Activated naive CD4-positive, alpha-beta T cell treated with anti-CD3 and anti-CD28 coated beads, Interleukin-2, amount 10 ng/mL, durations not matched to agents 7 days and 5 days (primary cell): ENCODE measurements at regions of chr2 and their contacts with region 1.

Region 1: GRCh38 chr2:64586883-64587481 is 62.9 kb downstream of the AFTPH start:
- DNase-seq: no peak
- H3K4me3 Mint-ChIP-seq: no peak overlapping the region
- H3K27ac Mint-ChIP-seq: no peak overlapping the region
- H3K4me1 Mint-ChIP-seq: peaks cover 3% of the 10 kb centered on the region
- H3K27me3 Mint-ChIP-seq: no peaks in the 10 kb centered on the region

Region 2: GRCh38 chr2:64506686-64507085 is 80.3 kb before region 1 on chr2:
- CTCF ChIA-PET with region 1: no interaction called
- DNase-seq: no peak
- H3K4me3 Mint-ChIP-seq: no peak overlapping the region
- H3K27ac Mint-ChIP-seq: no peak overlapping the region
- H3K4me1 Mint-ChIP-seq: no peaks in the 10 kb centered on the region
- H3K27me3 Mint-ChIP-seq: peaks cover 24% of the 10 kb centered on the region

Region 3: DNA sequence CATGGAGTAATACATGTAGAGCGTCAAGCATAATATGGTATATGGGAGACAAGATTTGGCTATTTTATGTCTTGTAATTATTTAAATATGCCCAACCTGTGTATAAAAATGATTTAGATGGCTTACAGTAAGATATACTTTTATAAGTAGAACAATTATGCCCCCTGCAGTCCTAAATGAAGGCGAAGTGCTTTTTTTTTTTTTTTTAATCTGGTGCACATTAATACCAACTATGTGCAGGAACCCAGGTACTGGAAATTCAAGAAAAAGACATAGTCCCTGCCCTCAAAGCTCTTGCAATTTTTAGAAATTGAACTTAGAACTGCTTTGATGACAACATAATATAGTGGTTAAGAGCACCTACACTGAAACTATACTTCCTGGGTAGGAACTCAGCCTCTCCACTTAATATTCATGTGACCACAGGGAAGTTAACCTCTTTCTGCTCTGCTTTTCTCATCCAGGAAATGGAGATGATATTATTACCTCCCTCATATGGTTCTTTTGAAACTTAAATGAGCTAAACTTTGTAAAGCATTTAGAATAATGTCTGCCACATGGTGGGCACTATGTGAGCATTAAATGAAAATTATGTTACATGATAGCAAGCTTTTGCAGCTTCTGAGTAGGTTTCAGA is 24.7 kb before region 1 on chr2:
- CTCF ChIA-PET with region 1: no interaction called
- DNase-seq: no peak
- H3K4me3 Mint-ChIP-seq: no peak overlapping the region
- H3K27ac Mint-ChIP-seq: no peak overlapping the region
- H3K4me1 Mint-ChIP-seq: peaks cover 27% of the 10 kb centered on the region
- H3K27me3 Mint-ChIP-seq: no peaks in the 10 kb centered on the region

Region 4: DNA sequence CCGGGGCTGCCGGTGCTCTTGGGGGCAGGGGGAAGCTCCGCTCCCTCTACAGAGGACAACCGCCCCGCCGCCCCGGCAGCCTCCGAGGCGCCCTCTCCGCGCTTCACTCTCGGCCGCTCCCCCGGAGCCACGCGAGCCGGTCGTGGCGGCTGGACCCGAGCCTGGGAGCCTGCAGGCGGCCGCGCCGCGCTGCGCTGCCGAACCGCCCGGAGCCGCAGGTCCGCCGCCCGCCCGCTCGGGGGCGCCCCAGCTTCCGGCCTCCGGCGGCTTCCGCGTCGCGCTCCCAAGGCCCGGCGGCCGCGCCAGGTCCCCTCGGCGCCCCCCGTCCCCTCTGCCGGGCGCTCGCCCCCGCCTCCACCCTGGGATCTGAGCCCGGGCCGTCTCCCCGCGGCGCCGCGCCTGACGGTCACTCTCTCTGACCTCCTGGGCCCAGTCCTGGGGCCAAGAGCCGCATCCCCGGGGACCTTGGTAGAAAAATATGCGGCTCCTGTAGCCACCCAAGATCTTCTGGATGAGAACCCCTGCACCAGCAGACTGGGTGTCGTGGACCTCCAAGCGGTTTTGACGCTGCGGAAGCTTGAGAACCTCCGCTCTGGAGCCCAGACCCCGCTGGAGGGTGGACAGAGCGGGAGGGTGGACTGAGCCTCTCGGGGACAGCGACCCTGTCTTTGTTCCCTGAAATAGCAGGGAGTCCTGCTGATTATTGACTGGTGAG is 22.4 kb after region 1 on chr2:
- CTCF ChIA-PET with region 1: interaction called, 18 read pairs
- DNase-seq: peak; percentile 75
- H3K4me3 Mint-ChIP-seq: peak overlapping the region; percentile 72
- H3K27ac Mint-ChIP-seq: no peak overlapping the region
- H3K4me1 Mint-ChIP-seq: peaks cover 33% of the 10 kb centered on the region
- H3K27me3 Mint-ChIP-seq: peaks cover 45% of the 10 kb centered on the region

Region 5: DNA sequence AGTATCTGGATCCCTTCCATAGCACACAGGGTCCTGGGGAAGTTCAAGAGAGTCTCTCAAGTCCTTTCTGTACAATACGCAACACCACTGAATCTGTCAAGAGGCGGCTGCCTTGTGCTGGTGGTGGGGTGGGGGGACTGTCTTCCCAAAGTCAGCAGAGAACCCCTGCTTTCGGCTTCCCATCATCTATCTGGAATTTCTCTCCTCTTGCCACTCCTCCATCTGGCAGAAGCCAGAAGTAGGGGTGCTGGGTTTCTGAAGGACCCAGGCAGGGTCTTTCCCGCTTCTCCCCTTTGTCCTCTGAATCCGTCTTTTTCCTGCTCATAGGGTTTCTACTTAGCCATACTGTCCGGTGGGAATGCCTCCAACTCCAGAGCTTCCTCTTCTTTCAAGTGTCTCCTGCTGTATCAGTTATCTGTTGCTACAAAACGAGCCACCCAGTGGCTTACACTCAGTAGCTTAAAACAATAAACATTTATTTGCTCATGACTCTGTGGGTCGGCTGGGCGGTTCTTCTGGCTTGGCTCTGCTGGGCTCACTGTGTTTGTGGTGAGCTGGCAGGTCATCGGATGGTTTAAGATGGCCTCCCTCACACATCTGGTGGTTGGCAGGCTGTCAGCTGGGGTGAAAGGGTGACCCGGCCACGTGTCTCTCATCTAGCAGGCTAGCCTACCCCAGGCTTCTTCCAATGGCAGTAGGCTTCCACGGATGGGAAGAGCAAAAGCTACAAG is 279.6 kb after region 1 on chr2:
- CTCF ChIA-PET with region 1: interaction called, 24 read pairs
- DNase-seq: no peak
- H3K4me3 Mint-ChIP-seq: no peak overlapping the region
- H3K27ac Mint-ChIP-seq: no peak overlapping the region
- H3K4me1 Mint-ChIP-seq: no peaks in the 10 kb centered on the region
- H3K27me3 Mint-ChIP-seq: peaks cover 45% of the 10 kb centered on the region

Region 6: GRCh38 chr2:64873472-64873924 is 286.5 kb after region 1 on chr2:
- CTCF ChIA-PET with region 1: interaction called, 24 read pairs
- DNase-seq: peak; percentile 82
- H3K4me3 Mint-ChIP-seq: no peak overlapping the region
- H3K27ac Mint-ChIP-seq: no peak overlapping the region
- H3K4me1 Mint-ChIP-seq: peaks cover 6% of the 10 kb centered on the region
- H3K27me3 Mint-ChIP-seq: peaks cover 52% of the 10 kb centered on the region